ENCODE measurements at regions of chr10 and their contacts with region 1.

Region 1: DNA sequence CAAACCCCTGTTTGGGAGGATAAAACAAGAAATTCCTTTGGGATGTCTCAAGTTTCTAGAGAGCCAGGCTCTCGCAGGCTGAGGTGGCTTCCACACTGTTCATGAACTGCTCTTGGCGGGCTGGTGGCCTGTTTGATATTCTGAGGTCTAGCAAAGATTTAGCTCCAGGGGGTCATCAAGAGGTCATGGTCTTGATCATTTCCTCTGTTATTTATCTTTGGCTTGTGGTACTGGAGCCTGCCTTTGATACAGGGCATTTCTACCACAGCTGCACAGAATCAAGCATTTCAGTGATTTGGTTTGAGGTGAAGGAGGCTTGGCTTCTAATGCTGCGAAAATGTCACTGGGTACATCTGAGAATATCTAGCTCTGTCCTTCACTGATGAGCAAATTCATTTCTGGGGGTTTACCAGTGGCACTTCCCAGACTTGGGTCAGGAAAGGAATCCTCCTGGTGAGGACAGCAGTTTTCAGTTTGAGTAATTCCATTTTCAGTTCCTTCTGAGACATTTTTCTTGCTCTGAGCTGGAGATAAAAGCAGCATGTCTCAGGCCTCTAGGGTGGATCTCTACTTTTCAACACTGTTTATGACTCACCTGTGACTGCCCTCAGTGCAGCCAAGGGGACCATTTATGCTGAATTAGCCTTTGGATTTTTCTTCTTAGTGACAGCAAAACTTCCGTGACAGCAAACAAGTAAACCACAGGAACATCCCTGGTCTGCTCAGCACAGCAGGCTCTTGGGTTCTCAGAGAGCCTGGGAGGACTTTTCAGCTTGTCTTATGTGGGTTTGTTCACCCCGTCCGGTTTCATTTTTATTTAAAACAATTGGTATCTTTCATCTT is 312.0 kb downstream of the RNLS start:
- DNase-seq: peak; percentile 70
- H3K4me3 Mint-ChIP-seq: peak overlapping the region; percentile 40
- H3K27ac Mint-ChIP-seq: peak overlapping the region; percentile 90
- H3K4me1 Mint-ChIP-seq: peaks cover 45% of the 10 kb centered on the region
- H3K27me3 Mint-ChIP-seq: peaks cover 1% of the 10 kb centered on the region

Region 2: DNA sequence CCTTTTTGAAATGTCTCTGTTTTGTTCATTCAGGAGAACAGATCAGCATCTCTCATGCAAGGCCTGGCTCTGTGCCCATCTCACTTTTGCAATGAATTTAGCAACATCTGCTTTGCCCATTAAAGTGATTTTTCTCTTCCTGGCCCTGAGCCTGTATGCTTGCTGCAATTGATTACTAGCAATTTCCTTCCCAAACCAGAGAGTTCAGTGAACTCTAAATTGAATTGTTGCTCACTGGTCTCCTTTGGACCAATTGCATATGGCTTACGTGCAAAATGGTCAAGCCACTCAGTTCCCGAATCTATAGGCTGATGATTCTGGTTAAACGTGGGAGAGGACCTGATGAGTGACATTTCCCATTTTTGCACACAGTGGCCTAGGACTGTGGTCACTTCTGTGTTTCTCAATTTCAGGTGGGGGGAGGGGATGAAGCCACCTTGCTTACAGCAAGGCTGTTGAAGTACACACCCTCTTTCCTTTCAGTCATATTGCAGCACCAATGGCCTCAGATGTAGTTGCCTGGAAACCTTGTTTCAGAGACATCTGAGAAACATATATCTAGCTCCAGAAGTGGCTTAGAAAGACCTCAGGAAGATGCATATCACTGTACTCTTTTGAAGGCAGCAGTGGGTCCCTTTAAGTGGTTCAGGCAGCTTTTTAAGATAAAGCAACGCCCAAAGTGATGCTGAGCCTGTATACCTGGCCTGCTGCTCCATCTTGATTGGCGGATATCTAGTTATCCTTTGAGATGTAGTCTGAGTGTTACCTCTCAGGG is 206.3 kb before region 1 on chr10:
- CTCF ChIA-PET with region 1: no interaction called
- POLR2A ChIA-PET with region 1: interaction called, 11 read pairs
- intact Hi-C with region 1: loop called (anchors 1 kb)
- DNase-seq: peak; percentile 51
- H3K4me3 Mint-ChIP-seq: no peak overlapping the region
- H3K27ac Mint-ChIP-seq: peak overlapping the region; percentile 9
- H3K4me1 Mint-ChIP-seq: peaks cover 49% of the 10 kb centered on the region
- H3K27me3 Mint-ChIP-seq: peaks cover 14% of the 10 kb centered on the region

Region 3: GRCh38 chr10:88114368-88114767 is 156.7 kb before region 1 on chr10:
- CTCF ChIA-PET with region 1: no interaction called
- POLR2A ChIA-PET with region 1: no interaction called
- intact Hi-C with region 1: loop called (anchors 1 kb)
- DNase-seq: peak; percentile 25
- H3K4me3 Mint-ChIP-seq: no peak overlapping the region
- H3K27ac Mint-ChIP-seq: no peak overlapping the region
- H3K4me1 Mint-ChIP-seq: peaks cover 6% of the 10 kb centered on the region
- H3K27me3 Mint-ChIP-seq: peaks cover 2% of the 10 kb centered on the region

Region 4: GRCh38 chr10:88194041-88194887 is 76.8 kb before region 1 on chr10:
- CTCF ChIA-PET with region 1: interaction called, 6 read pairs
- POLR2A ChIA-PET with region 1: no interaction called
- intact Hi-C with region 1: loop called (anchors 1 kb)
- DNase-seq: peak; percentile 38
- H3K4me3 Mint-ChIP-seq: no peak overlapping the region
- H3K27ac Mint-ChIP-seq: peak overlapping the region; percentile 44
- H3K4me1 Mint-ChIP-seq: peaks cover 32% of the 10 kb centered on the region
- H3K27me3 Mint-ChIP-seq: no peaks in the 10 kb centered on the region

Region 5: GRCh38 chr10:88234297-88234696 is 36.8 kb before region 1 on chr10:
- CTCF ChIA-PET with region 1: no interaction called
- POLR2A ChIA-PET with region 1: no interaction called
- intact Hi-C with region 1: no loop called
- DNase-seq: no peak
- H3K4me3 Mint-ChIP-seq: no peak overlapping the region
- H3K27ac Mint-ChIP-seq: no peak overlapping the region
- H3K4me1 Mint-ChIP-seq: peaks cover 2% of the 10 kb centered on the region
- H3K27me3 Mint-ChIP-seq: no peaks in the 10 kb centered on the region

Region 6: GRCh38 chr10:88260329-88261051 is 10.6 kb before region 1 on chr10:
- CTCF ChIA-PET with region 1: no interaction called
- POLR2A ChIA-PET with region 1: no interaction called
- intact Hi-C with region 1: no loop called
- DNase-seq: no peak
- H3K4me3 Mint-ChIP-seq: no peak overlapping the region
- H3K27ac Mint-ChIP-seq: no peak overlapping the region
- H3K4me1 Mint-ChIP-seq: peaks cover 2% of the 10 kb centered on the region
- H3K27me3 Mint-ChIP-seq: no peaks in the 10 kb centered on the region

Region 7: GRCh38 chr10:88386821-88387773 is 116.0 kb after region 1 on chr10:
- CTCF ChIA-PET with region 1: interaction called, 5 read pairs
- POLR2A ChIA-PET with region 1: no interaction called
- intact Hi-C with region 1: loop called (anchors 2 kb)
- DNase-seq: no peak
- H3K4me3 Mint-ChIP-seq: no peak overlapping the region
- H3K27ac Mint-ChIP-seq: peak overlapping the region; percentile 42
- H3K4me1 Mint-ChIP-seq: peaks cover 16% of the 10 kb centered on the region
- H3K27me3 Mint-ChIP-seq: no peaks in the 10 kb centered on the region

Region 8: DNA sequence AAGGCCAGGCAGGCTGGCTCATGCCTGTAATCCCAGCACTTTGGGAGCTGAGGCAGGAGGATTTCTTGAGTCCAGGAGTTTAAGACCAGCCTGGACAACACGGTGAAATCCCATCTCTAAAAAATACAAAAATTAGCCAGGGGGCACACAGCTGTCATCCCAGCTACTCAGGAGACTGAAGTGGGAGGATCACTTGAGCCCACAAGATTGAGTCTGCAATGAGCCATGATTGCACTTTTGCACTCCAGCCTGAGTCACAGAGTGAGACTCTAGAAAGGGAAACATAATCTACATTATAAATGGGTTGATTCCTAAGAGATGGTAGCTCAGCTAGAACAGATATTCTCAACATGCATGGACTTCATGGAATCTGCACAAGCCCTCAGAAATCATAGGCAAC is 386.8 kb after region 1 on chr10:
- CTCF ChIA-PET with region 1: no interaction called
- POLR2A ChIA-PET with region 1: no interaction called
- intact Hi-C with region 1: no loop called
- DNase-seq: no peak
- H3K4me3 Mint-ChIP-seq: no peak overlapping the region
- H3K27ac Mint-ChIP-seq: no peak overlapping the region
- H3K4me1 Mint-ChIP-seq: no peaks in the 10 kb centered on the region
- H3K27me3 Mint-ChIP-seq: peaks cover 3% of the 10 kb centered on the region

Region 9: DNA sequence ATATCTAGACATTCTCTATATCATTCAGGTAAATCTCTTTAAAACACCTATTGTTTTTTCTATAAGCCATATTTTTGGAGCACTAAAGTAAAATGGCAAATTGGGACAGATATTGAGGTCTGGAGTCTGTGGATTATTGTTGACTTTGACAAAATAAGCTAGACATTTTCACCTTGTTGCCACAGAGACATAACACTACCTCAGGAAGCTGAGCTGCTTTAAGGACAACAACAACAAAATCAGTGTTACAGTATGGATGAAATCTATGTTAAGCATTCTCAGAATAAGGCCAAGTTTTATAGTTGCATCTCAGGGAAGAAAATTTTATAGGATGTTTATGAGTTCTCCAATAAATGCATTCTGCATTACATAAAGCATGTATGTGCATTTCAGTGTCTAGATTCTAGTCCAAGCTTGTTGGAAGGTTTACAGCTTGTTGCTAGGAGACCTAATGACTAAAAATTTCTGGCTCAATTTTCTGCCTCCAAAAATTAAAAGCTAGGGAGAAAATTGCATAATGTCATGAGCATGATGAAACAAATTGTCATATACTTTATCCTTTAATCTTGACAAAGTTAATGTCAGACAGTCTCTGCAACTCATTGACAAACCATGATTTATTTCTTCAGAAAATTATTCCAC is 549.8 kb after region 1 on chr10:
- CTCF ChIA-PET with region 1: no interaction called
- POLR2A ChIA-PET with region 1: interaction called, 3 read pairs
- intact Hi-C with region 1: loop called (anchors 10 kb)
- DNase-seq: no peak
- H3K4me3 Mint-ChIP-seq: no peak overlapping the region
- H3K27ac Mint-ChIP-seq: no peak overlapping the region
- H3K4me1 Mint-ChIP-seq: peaks cover 20% of the 10 kb centered on the region
- H3K27me3 Mint-ChIP-seq: no peaks in the 10 kb centered on the region